A549 (cell line): ENCODE measurements at regions of chr17 and their contacts with region 1.

Region 1: DNA sequence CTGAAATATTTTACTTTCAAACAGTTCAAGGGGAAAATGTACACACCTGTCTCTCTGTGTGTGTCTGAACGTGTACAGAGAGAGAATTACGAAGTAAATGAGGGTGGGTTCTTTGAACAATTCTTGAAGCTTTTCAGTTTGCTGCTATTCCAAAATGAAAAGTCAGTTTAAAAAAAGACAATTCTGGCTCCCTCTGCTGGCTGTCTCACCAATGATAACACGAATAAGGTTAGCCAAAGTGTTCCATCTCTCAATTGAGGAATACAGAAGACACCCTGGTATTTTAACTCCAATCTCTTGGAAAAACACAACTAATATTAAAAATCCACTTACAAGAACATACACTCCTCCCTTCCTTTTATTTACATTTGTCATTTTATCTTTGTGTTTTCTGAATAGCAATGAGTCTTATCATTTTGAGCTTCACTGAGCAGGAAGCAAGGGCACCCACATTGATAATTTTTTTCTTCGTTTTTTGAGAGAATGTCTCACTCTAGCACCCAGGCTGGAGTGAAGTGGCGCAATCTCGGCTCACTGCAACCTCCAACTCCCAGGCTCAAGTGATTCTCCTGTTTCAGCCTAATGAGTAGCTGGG is 20.5 kb downstream of the EFTUD2 start:
- DNase-seq: peak; percentile 45 to 80
- ATAC-seq: peak; percentile 80 to 85; a peak in 5 of 6 replicates
- H3K4me3 ChIP-seq: no peak overlapping the region
- H3K27ac ChIP-seq: no peak overlapping the region
- H3K4me1 ChIP-seq: no peaks in the 10 kb centered on the region
- CTCF ChIP-seq: peak; percentile 94
- EP300 ChIP-seq: no peak
- POLR2A ChIP-seq: no peak
- RAD21 ChIP-seq: peak; percentile 54

Region 2: DNA sequence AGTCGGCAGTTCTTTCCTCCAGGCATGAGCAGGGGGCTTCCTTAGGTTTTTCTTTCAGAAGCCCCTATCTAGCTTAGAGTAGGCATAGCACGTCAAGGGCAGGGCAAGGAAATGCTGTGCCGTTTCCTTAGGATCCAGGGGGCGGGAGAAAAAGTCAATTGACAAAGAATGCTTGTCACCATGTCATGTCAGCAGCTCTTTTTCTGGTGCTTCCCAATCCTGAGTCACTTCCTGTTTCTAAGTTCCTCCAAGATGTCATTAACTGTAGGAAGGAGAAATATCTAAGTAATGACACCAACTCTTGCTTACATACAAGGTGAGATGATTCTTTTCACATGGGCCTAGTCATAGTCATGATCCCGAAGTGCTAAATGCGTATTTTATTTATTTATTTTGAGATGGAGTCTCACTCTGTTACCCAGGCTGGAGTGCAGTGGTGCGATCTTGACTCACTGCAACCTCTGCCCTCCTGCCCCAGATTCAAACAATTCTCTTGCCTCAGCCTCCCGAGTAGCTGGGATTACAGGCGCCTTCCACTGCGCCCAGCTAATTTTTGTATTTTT is 83.8 kb before region 1 on chr17:
- CTCF ChIA-PET with region 1: interaction called, 1,787 read pairs
- POLR2A ChIA-PET with region 1: no interaction called
- DNase-seq: peak; percentile 56 to 84
- ATAC-seq: peak; percentile 81 to 83
- H3K4me3 ChIP-seq: no peak overlapping the region
- H3K27ac ChIP-seq: peak overlapping the region; percentile 28 to 78; a peak in 5 of 6 replicates
- H3K4me1 ChIP-seq: peaks cover 18% of the 10 kb centered on the region
- CTCF ChIP-seq: no peak
- EP300 ChIP-seq: no peak
- POLR2A ChIP-seq: no peak
- RAD21 ChIP-seq: no peak

Region 3: GRCh38 chr17:44844390-44844830 is 34.3 kb before region 1 on chr17:
- CTCF ChIA-PET with region 1: interaction called, 61 read pairs
- POLR2A ChIA-PET with region 1: no interaction called
- DNase-seq: no peak
- ATAC-seq: peak; percentile 10 to 35; a peak in 4 of 6 replicates
- H3K4me3 ChIP-seq: no peak overlapping the region
- H3K27ac ChIP-seq: no peak overlapping the region
- H3K4me1 ChIP-seq: no peaks in the 10 kb centered on the region
- CTCF ChIP-seq: no peak
- EP300 ChIP-seq: no peak
- POLR2A ChIP-seq: no peak
- RAD21 ChIP-seq: no peak

Region 4: DNA sequence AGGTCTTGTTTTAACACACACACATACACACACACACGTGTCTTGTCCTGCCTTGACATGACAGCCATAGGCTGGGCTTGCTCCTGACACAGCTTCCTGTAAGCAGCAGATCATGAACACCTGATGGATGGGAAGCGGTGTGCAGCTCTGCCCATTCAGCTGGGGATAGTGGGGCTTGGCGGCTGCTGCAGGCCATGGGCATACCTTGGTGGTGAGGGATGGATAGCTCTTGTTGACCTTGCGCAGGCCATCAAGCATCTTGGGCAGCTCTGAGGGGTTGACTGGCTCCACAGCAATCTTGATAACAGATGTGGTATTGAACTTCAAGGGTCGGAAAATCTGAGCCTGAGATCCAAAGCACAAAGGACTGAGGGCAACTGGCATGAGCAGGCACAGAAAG is 19.0 kb before region 1 on chr17:
- CTCF ChIA-PET with region 1: interaction called, 294 read pairs
- POLR2A ChIA-PET with region 1: interaction called, 4 read pairs
- DNase-seq: no peak
- ATAC-seq: no peak
- H3K4me3 ChIP-seq: no peak overlapping the region
- H3K27ac ChIP-seq: no peak overlapping the region
- H3K4me1 ChIP-seq: no peaks in the 10 kb centered on the region
- CTCF ChIP-seq: no peak
- EP300 ChIP-seq: no peak
- POLR2A ChIP-seq: no peak
- RAD21 ChIP-seq: no peak

Region 5: DNA sequence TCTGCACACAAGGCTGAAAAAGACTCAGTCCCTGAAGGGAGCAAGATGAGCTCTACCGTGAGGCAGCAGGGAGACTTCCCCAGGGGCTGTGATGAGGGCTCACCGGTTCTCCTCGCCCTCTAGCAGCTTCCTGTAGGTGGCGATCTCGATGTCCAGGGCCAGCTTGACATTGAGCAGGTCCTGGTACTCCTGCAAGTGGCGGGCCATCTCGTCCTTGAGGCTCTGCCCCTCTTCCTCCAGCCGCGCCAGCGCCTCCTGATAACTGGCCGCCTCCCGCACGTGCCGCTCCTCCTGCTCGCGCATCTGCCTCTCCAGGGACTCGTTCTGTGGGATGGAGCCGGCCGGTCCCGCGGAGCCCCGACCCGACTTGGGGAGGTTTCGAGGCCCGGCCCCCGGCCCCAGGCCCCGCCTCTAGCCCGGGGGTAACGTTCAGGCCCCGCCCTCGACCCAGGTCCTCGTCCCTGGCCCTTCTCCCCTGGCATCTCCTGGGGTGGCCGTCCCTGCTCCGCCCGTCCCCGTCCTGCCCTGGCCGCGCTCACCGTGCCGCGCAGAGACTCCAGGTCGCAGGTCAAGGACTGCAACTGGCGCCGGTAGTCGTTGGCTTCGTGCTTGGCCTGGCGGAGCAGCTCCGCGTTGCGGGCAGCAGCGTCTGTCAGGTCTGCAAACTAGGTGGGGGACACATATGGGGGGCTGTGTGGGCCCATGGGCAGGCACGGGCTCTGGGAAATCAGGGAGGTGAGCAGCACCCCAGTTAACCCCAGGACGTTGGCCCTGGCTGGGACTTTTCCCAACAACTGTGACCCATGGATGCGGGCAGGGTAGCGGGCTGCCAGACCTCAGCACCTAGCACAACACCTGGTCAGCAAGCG is 32.6 kb after region 1 on chr17:
- CTCF ChIA-PET with region 1: interaction called, 10 read pairs
- POLR2A ChIA-PET with region 1: no interaction called
- DNase-seq: peak; percentile 87 to 95
- ATAC-seq: peak; percentile 64 to 92
- H3K4me3 ChIP-seq: no peak overlapping the region
- H3K27ac ChIP-seq: peak overlapping the region; percentile 36 to 91; a peak in 4 of 6 replicates
- H3K4me1 ChIP-seq: peaks cover 46% of the 10 kb centered on the region
- CTCF ChIP-seq: peak; percentile 66
- EP300 ChIP-seq: no peak
- POLR2A ChIP-seq: no peak
- RAD21 ChIP-seq: peak; percentile 43 to 55

Region 6: DNA sequence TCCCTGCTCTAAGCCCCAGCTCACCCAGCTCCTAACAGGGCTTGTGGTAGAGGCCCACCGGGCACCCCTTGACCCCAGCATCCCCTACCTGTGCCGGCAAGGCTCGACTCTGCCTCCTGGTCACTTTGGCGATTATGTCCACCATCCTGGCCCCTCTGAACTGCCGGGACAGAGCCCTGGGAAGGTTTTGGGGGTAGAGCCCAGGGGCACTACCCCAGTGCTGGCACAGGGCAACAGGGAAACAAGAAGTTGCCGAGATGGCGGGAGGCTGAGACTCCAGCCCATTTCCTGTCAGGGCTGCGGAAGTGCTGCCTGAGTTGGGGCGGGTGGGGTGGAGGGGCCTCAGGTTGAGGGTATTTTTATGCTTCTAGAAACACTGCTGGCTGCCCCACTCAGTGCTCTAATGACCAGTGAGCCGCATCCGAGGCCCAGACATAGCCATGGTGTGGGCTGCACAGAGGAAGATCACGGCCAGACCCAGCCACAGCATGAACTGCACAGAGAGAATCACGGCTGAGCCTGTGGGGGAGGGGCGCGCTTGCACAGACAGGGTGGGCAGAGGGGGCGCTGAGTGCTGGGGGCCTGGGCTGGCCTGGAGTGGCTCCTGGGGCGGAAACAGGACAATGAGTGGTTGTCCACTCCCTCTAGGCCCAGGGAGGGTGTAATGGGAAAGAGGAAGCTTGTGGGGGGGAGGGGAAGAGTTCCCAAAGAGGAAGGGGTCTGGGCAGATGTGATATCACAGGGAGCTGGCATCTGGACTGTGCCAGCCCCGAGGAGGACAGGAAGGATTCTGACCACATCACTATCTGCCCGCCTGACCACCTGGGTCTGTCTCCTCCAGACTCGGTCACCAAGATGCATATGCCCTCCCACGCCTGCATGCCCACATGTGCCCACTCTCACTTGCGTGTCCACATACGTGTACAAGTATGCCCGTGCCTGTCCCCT is 531.7 kb after region 1 on chr17:
- CTCF ChIA-PET with region 1: no interaction called
- POLR2A ChIA-PET with region 1: no interaction called
- DNase-seq: no peak
- ATAC-seq: no peak
- H3K4me3 ChIP-seq: no peak overlapping the region
- H3K27ac ChIP-seq: no peak overlapping the region
- H3K4me1 ChIP-seq: peaks cover 45% of the 10 kb centered on the region
- CTCF ChIP-seq: no peak
- EP300 ChIP-seq: no peak
- POLR2A ChIP-seq: no peak
- RAD21 ChIP-seq: no peak